ENCODE measurements at regions of chr4 and their contacts with region 1.

Region 1: DNA sequence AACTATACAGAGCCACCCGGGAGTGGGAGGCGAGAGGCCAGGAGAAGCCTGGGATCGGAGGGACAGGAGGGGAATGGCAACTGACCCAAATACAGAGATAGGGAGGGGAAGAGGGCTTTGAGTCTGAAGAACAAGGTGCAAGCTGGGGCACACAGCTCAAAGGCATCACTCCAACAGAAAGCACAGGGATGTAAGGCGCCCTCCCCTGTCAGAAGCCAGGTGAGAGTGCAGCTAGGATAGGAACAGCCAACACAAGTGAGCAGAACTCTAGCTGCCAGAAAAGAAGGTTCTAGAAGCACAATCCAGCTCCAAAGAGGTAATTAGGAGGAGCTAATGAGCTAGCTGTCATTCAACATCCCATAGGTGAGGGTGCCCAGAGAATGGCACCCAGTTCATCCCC is 232.2 kb downstream of the DHX15 start:
- DNase-seq: no peak
- H3K4me3 ChIP-seq: no peak overlapping the region
- H3K27ac ChIP-seq: no peak overlapping the region
- H3K4me1 ChIP-seq: peaks cover 0 to 4% (median 2%) of the 10 kb centered on the region in 4 experiments; a peak in 1 of 7 replicates
- H3K27me3 ChIP-seq: peaks cover 0 to 5% (median 1%) of the 10 kb centered on the region in 4 experiments; a peak in 2 of 7 replicates
- CTCF ChIP-seq: no peak
- EP300 ChIP-seq: no peak
- POLR2A ChIP-seq: no peak
- RAD21 ChIP-seq: peak in 1 of 2 experiments; percentile 24; a peak in 1 of 4 replicates

Region 2: DNA sequence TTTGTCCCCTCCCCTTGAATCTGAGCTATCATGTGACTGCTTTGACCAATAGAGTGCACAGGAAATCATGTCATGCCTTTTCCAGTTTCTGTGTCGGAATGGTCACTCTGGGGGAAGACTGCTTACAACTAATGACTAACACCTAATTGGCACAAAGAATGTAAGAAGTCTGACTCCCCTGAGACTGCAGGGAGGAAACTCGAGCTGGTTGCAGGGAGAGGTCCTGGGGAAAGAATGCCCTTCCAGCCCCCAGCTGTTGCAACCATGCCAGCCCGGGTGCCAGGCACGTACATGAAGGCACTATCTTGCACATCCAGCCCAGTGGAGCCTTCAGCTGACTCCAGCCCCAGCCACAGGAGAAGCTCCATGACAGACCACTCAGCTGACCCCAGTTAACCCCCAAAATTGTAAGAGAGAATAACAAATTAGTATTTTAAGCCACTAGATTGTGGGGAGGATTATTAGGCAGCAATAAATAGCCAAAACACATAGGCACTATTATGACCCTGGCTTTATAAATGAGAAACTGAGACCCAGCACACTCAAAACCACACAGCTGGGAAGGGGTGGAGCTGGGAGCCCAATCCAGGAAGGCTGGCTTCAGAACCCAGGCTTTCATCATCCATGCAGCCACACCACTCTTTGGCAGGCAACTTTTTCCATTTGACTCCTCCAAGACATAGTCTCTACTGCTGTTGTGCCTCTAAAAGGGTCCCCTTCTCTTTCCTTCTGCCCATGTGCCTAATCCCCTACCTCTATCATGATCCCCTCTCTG is 21.7 kb before region 1 on chr4:
- CTCF ChIA-PET with region 1: interaction called, 18 read pairs
- POLR2A ChIA-PET with region 1: no interaction called
- DNase-seq: no peak
- H3K4me3 ChIP-seq: peak overlapping the region in 1 of 4 experiments; percentile 45; a peak in 2 of 8 replicates
- H3K27ac ChIP-seq: no peak overlapping the region
- H3K4me1 ChIP-seq: peaks cover 4 to 23% (median 16%) of the 10 kb centered on the region in 4 experiments; a peak in 5 of 7 replicates
- H3K27me3 ChIP-seq: no peaks in the 10 kb centered on the region
- CTCF ChIP-seq: no peak
- EP300 ChIP-seq: no peak
- POLR2A ChIP-seq: 0 out of 3 replicates have a peak, but pooled peaks of 1 of the 2 experiments have one; percentile 40
- RAD21 ChIP-seq: no peak

Region 3: GRCh38 chr4:24363751-24364150 is 11.6 kb after region 1 on chr4:
- CTCF ChIA-PET with region 1: interaction called, 10 read pairs
- POLR2A ChIA-PET with region 1: no interaction called
- DNase-seq: no peak
- H3K4me3 ChIP-seq: no peak overlapping the region
- H3K27ac ChIP-seq: no peak overlapping the region
- H3K4me1 ChIP-seq: no peaks in the 10 kb centered on the region
- H3K27me3 ChIP-seq: peaks cover 0 to 2% (median 0%) of the 10 kb centered on the region in 4 experiments; a peak in 3 of 7 replicates
- CTCF ChIP-seq: no peak
- EP300 ChIP-seq: no peak
- POLR2A ChIP-seq: no peak
- RAD21 ChIP-seq: no peak

Region 4: GRCh38 chr4:24413291-24413784 is 61.2 kb after region 1 on chr4:
- CTCF ChIA-PET with region 1: interaction called, 15 read pairs
- POLR2A ChIA-PET with region 1: no interaction called
- DNase-seq: peak in 1 of 2 experiments; percentile 46
- H3K4me3 ChIP-seq: no peak overlapping the region
- H3K27ac ChIP-seq: no peak overlapping the region
- H3K4me1 ChIP-seq: peaks cover 0 to 3% (median 1%) of the 10 kb centered on the region in 4 experiments; a peak in 4 of 7 replicates
- H3K27me3 ChIP-seq: peaks cover 0 to 12% (median 4%) of the 10 kb centered on the region in 4 experiments; a peak in 4 of 7 replicates
- CTCF ChIP-seq: peak in 2 of 3 experiments; percentile 25 to 31; a peak in 2 of 4 replicates
- EP300 ChIP-seq: no peak
- POLR2A ChIP-seq: no peak
- RAD21 ChIP-seq: peak in 1 of 2 experiments; percentile 21; a peak in 1 of 4 replicates